ENCODE measurements at regions of chr13 and their contacts with region 1.

Region 1: DNA sequence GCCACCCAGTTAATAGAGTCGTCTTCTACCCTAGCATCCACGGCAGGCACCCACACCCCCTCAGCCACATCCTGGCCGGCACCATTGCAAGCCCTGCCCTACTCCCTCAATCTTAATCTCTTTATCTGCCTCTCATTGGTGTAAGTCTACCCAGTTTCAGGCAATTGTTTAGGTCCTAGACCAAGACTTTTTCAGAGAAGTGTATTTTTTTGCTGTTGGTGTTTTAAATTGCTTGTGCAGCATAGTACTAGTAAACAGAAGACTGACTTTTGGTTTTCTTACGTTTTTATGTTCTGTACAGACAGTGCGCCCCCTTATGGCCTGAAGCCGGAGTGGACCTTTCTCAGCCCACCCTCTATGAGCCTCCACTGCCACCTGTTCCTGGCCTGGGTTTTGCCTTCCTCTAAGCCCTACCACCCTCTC is 2.3 kb upstream of the LCP1 start:
- DNase-seq: peak; percentile 67 to 89
- ATAC-seq: peak; percentile 66 to 82 (median 73)
- H3K4me3 ChIP-seq: peak overlapping the region; percentile 16
- H3K4me3 Mint-ChIP-seq: peak overlapping the region; percentile 95
- H3K27ac ChIP-seq: peak overlapping the region; percentile 76
- H3K27ac Mint-ChIP-seq: peak overlapping the region; percentile 84 to 96
- H3K4me1 ChIP-seq: peaks cover 32% of the 10 kb centered on the region
- H3K4me1 Mint-ChIP-seq: peaks cover 49 to 62% of the 10 kb centered on the region in 2 donors
- H3K27me3 ChIP-seq: no peaks in the 10 kb centered on the region
- H3K27me3 Mint-ChIP-seq: no peaks in the 10 kb centered on the region
- CTCF ChIP-seq: peak; percentile 67

Region 2: DNA sequence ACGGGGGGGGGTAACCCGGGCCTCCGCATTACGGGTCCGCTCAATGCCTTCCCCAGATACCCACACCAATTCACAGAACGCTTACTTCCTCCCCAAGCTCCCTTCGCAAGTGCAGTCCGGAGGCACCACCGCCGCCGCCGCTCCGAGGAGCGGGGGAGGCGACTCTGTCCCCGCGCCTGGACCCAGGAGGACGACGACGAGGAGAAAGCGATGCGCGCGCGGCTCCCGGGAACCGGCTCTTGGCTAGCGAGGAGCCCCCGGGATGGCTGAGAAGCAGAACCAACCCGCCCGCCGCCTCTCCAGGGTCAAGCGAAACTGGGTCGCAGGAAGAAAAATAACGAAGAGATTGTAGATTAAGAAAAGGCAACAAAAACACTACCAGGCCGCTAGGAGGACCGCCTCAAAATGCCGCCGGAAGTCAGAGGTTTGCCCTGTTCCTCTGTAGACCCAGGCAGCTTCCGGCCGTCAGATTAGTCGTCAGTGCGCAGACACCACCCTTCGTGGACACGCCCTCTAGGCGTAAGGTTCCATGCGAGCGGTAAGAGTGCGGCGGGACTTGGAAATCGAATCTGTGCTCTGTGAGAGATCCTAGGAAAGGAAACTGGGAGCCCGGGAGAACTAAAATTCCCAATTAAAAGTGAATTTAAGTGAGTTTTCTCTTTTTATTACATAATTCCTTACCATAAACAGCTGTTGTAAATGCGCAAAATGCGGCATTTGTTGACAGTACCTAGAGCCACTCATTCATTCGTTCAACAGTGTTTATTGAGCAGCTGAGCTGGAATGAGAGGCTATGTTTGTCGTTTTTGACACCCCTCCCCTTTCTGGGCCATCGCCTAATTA is 131.7 kb before region 1 on chr13 and contains the start of gene ZC3H13:
- intact Hi-C with region 1: loop called (anchors 5 kb)
- DNase-seq: peak; percentile 85 to 97
- ATAC-seq: peak; percentile 96 to 100 (median 98)
- H3K4me3 ChIP-seq: peak within 1 kb of the TSS; percentile 94
- H3K4me3 Mint-ChIP-seq: peak within 1 kb of the TSS; percentile 87
- H3K27ac ChIP-seq: peak within 1 kb of the TSS; percentile 97
- H3K27ac Mint-ChIP-seq: peak within 1 kb of the TSS; percentile 97 to 98
- H3K4me1 ChIP-seq: peaks cover 4% of the 10 kb centered on the region
- H3K4me1 Mint-ChIP-seq: peaks cover 21 to 24% of the 10 kb centered on the region in 2 donors
- H3K27me3 ChIP-seq: peaks cover 5% of the 10 kb centered on the region
- H3K27me3 Mint-ChIP-seq: peaks cover 28 to 50% of the 10 kb centered on the region in 2 donors
- CTCF ChIP-seq: peak; percentile 41
- total RNA-seq, gene ZC3H13: 54.3 to 75.3 (median 65.8) TPM

Region 3: DNA sequence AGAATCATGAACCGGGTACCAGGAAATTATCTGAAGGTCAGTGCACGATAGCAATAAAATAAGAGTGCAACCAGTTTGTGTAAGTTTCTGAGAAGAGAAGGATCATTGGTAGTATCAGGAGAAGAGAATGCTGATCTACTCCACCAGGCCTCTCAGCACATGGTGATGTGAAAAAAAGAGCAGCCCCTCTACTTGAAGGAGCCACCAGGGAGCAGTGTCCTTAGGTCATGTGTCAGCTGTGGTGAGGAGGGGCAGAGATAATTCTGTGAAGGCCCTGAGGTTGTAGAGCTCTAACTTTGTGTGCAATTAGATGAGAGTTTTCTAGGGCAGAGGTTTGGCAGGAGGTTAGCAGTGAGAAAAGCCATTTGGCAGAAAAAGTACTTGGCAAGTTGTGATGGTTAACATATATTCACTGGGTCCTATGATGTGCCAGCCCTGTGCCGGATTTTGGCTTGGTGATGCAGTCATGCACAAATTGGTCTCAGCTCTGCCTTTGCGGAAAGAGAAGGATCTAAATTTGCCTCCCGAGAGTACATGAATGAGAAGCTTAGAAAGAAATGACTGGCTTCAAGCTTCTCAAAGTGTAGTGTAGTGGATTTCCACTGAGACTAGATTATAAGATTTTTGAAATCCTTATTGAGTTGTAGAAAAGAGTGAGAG is 112.6 kb before region 1 on chr13:
- intact Hi-C with region 1: no loop called
- DNase-seq: peak in 1 of 2 donors; percentile 32
- ATAC-seq: peak in 2 of 3 donors; percentile 44 to 50
- H3K4me3 ChIP-seq: no peak overlapping the region
- H3K4me3 Mint-ChIP-seq: no peak overlapping the region
- H3K27ac ChIP-seq: no peak overlapping the region
- H3K27ac Mint-ChIP-seq: no peak overlapping the region
- H3K4me1 ChIP-seq: no peaks in the 10 kb centered on the region
- H3K4me1 Mint-ChIP-seq: peaks cover 0 to 4% of the 10 kb centered on the region in 2 donors
- H3K27me3 ChIP-seq: no peaks in the 10 kb centered on the region
- H3K27me3 Mint-ChIP-seq: peaks cover 9 to 34% of the 10 kb centered on the region in 2 donors
- CTCF ChIP-seq: no peak

Region 4: DNA sequence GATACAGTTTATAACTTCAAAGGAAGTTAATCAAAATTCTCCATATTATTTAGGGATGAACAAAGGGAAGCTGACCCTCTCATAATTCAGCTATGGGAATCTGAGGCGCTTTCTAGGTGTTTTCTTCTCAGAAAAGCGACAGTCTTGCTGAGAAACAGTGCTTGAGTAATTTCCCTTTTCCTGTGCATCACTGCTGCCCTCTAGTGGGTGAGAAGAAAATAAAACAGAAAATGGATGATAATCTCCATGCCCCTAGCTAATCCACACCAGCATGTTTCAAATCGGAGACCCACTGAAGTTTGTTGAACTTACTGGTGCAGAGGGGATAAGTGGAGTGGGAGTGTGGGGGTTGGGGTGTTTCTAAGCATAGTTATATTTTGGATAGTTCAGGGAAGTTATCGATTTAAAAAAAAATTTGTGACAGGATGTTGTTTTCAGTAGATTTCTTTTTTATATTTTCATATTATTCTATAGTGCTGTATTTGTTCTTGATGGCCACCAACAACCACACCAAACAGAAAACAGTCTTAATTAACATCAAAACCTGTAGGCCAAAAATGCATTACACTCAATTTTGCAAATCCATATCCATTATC is 23.7 kb before region 1 on chr13:
- intact Hi-C with region 1: loop called (anchors 1 kb)
- DNase-seq: peak in 1 of 2 donors; percentile 93
- ATAC-seq: peak; percentile 80 to 93 (median 82)
- H3K4me3 ChIP-seq: no peak overlapping the region
- H3K4me3 Mint-ChIP-seq: peak overlapping the region; percentile 80
- H3K27ac ChIP-seq: peak overlapping the region; percentile 67
- H3K27ac Mint-ChIP-seq: peak overlapping the region; percentile 88 to 96
- H3K4me1 ChIP-seq: peaks cover 24% of the 10 kb centered on the region
- H3K4me1 Mint-ChIP-seq: peaks cover 59 to 67% of the 10 kb centered on the region in 2 donors
- H3K27me3 ChIP-seq: no peaks in the 10 kb centered on the region
- H3K27me3 Mint-ChIP-seq: no peaks in the 10 kb centered on the region
- CTCF ChIP-seq: peak; percentile 80

Region 5: DNA sequence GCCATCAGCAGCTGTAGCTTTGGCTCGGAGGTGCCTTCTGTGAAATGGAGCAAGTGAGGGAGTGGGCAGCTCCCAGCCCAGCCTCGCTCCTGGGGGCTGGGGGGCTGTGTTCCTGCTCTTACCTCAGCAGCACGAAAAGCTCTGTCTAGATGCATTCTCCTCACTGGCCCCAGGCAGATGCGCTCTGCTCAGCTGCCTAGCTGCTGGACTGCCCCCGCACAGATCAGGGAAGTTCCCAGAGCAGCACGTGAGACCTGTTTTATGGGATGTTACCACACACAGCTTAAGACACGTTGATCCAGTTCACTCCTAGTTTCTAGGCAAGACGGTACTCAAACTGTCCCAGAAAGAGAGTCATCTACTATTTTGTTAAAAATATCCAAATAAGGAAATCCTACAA is 15.9 kb before region 1 on chr13:
- intact Hi-C with region 1: loop called (anchors 1 kb)
- DNase-seq: peak; percentile 50 to 83
- ATAC-seq: peak; percentile 57 to 84 (median 73)
- H3K4me3 ChIP-seq: no peak overlapping the region
- H3K4me3 Mint-ChIP-seq: peak overlapping the region; percentile 95
- H3K27ac ChIP-seq: peak overlapping the region; percentile 70
- H3K27ac Mint-ChIP-seq: peak overlapping the region; percentile 84 to 96
- H3K4me1 ChIP-seq: peaks cover 69% of the 10 kb centered on the region
- H3K4me1 Mint-ChIP-seq: peaks cover 93 to 94% of the 10 kb centered on the region in 2 donors
- H3K27me3 ChIP-seq: no peaks in the 10 kb centered on the region
- H3K27me3 Mint-ChIP-seq: no peaks in the 10 kb centered on the region
- CTCF ChIP-seq: no peak

Region 6: DNA sequence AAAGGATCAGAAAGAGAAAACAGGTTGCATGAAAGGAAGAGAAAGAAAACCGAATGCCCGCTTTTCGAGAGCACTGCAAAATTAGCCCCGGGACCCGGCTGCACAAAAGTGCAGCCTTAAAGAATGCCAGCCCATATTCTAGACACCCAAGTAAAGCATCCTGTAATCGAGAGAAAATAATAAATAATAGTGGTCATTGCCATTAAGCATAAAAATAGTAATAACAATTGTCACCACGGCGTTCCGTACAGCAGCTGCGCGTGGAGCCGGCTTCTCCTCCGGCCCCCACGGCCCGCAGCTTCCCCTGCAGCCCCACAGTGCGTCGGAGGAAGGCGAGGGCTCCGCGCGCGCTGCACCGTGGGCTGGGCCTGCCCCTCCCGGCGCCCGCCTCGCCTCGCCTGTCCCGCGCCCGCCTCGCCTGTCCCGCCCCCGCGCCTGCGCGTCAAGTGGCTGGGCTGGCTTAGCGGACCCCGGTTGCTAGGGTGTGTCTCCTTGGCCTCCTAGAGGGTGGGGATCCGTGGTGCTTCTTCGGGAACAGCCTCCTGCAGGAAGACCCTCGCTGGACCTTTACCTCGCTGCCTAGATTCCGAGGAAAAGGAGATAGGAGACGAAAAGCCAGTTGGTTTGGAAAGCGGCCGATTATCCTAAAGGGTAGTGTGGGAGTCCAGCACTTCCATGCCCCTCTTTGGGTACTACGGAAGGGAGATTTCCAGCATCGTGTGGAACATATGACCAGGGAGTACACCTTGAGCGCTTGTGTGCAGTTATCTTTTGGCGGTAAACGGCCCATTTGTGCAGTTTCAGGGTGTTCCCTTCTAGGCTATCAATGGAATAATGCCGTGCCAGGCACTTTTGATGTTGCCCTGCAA is 27.4 kb after region 1 on chr13 and contains the start of gene LRRC63:
- intact Hi-C with region 1: loop called (anchors 2 kb)
- DNase-seq: peak; percentile 74 to 89
- ATAC-seq: peak; percentile 98 to 100 (median 99)
- H3K4me3 ChIP-seq: peak within 1 kb of the TSS; percentile 56
- H3K4me3 Mint-ChIP-seq: peak within 1 kb of the TSS; percentile 93
- H3K27ac ChIP-seq: peak within 1 kb of the TSS; percentile 68
- H3K27ac Mint-ChIP-seq: peak within 1 kb of the TSS; percentile 79 to 90
- H3K4me1 ChIP-seq: peaks cover 6% of the 10 kb centered on the region
- H3K4me1 Mint-ChIP-seq: peaks cover 16 to 17% of the 10 kb centered on the region in 2 donors
- H3K27me3 ChIP-seq: no peaks in the 10 kb centered on the region
- H3K27me3 Mint-ChIP-seq: no peaks in the 10 kb centered on the region
- CTCF ChIP-seq: no peak
- total RNA-seq, gene LRRC63: 0.32 to 0.95 (median 0.40) TPM

Region 7: GRCh38 chr13:46295491-46296114 is 111.3 kb after region 1 on chr13:
- intact Hi-C with region 1: loop called (anchors 5 kb)
- DNase-seq: peak; percentile 68 to 92
- ATAC-seq: peak; percentile 80 to 94 (median 91)
- H3K4me3 ChIP-seq: no peak overlapping the region
- H3K4me3 Mint-ChIP-seq: peak overlapping the region; percentile 79
- H3K27ac ChIP-seq: peak overlapping the region; percentile 83
- H3K27ac Mint-ChIP-seq: peak overlapping the region; percentile 88 to 97
- H3K4me1 ChIP-seq: peaks cover 29% of the 10 kb centered on the region
- H3K4me1 Mint-ChIP-seq: peaks cover 39 to 40% of the 10 kb centered on the region in 2 donors
- H3K27me3 ChIP-seq: no peaks in the 10 kb centered on the region
- H3K27me3 Mint-ChIP-seq: no peaks in the 10 kb centered on the region
- CTCF ChIP-seq: no peak

Region 8: DNA sequence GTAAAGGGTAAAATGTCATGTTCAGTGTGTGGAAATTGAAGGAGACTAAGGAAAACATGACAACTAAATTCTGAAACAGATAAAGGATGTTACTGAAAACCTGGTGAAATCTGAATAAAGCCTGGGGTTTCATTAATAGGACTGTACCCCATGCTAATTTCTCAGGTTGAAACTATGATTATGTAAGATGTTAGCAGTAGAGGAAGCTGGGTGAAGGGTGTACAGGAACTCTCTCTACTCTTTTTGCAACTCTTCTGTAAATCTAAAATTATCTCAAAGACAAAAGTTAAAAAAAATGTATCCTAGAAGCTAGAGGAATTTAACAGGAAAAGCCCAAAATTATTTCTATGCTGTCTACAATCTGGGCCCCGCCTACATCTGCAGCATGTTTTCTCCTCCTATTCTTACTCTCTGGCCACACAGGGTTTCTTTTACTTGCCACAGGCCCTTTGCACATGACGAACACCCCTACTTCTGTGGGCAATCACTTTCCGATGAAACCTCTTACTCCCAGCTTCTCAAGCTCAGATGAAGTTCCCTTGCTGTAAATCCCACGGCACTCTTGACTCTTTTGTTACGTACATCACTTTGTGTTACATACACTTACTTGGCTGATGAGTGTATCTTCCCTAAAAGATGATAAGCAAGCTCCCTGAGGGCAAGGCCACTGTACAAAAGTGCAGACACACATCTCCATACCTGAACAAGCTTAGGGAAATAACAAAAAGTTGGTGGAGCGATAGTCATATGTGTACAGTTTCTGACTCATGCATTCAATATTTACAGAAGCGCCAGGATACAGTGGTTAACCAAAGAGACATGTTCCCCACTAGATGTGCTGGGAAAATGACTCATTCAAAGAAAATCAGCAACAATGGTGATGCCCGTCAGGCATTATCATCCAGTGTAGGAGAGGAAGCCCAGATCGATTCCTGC is 170.1 kb after region 1 on chr13:
- intact Hi-C with region 1: no loop called
- DNase-seq: peak in 1 of 2 donors; percentile 18
- ATAC-seq: peak in 2 of 3 donors; percentile 30 to 34
- H3K4me3 ChIP-seq: no peak overlapping the region
- H3K4me3 Mint-ChIP-seq: no peak overlapping the region
- H3K27ac ChIP-seq: no peak overlapping the region
- H3K27ac Mint-ChIP-seq: peak overlapping the region in 1 of 2 donors; percentile 6
- H3K4me1 ChIP-seq: peaks cover 4% of the 10 kb centered on the region
- H3K4me1 Mint-ChIP-seq: peaks cover 6 to 7% of the 10 kb centered on the region in 2 donors
- H3K27me3 ChIP-seq: no peaks in the 10 kb centered on the region
- H3K27me3 Mint-ChIP-seq: peaks cover 0 to 5% of the 10 kb centered on the region in 2 donors
- CTCF ChIP-seq: no peak